Activated CD4-positive, alpha-beta memory T cell treated with anti-CD3 and anti-CD28 coated beads for 36 hours (primary cell): ENCODE measurements at regions of chr2 and their contacts with region 1.

Region 1: DNA sequence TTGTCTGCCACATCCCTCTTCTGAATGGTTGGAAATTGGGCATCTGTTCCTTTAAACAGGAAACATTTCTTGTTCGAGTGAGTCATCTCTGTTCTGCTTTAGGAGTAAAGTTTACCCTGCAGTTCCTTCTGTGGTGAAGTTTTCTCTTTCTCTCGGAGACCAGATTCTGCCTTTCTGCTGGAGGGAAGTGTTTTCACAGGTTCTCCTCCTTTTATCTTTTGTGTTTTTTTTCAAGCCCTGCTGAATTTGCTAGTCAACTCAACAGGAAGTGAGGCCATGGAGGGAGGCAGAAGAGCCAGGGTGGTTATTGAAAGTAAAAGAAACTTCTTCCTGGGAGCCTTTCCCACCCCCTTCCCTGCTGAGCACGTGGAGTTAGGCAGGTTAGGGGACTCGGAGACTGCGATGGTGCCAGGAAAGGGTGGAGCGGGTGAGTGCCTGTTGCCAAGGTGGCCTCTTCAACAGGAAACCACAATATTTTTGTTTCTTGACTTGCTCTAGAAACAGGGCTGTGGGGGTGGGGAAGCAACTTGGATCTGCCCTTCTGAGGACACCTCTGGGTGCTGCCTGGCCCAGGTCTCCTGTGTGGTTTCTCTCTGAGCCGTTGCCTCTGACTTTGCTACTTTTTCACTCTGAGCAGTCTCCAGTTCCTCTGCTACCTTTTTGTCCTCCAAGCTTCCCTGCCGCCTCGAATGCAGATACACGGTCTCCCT is 2.2 kb upstream of the CASP8 start:
- DNase-seq: peak; percentile 96
- H3K4me3 Mint-ChIP-seq: peak overlapping the region; percentile 85
- H3K27ac Mint-ChIP-seq: peak overlapping the region; percentile 98
- H3K4me1 Mint-ChIP-seq: peaks cover 66% of the 10 kb centered on the region
- H3K27me3 Mint-ChIP-seq: no peaks in the 10 kb centered on the region

Region 2: DNA sequence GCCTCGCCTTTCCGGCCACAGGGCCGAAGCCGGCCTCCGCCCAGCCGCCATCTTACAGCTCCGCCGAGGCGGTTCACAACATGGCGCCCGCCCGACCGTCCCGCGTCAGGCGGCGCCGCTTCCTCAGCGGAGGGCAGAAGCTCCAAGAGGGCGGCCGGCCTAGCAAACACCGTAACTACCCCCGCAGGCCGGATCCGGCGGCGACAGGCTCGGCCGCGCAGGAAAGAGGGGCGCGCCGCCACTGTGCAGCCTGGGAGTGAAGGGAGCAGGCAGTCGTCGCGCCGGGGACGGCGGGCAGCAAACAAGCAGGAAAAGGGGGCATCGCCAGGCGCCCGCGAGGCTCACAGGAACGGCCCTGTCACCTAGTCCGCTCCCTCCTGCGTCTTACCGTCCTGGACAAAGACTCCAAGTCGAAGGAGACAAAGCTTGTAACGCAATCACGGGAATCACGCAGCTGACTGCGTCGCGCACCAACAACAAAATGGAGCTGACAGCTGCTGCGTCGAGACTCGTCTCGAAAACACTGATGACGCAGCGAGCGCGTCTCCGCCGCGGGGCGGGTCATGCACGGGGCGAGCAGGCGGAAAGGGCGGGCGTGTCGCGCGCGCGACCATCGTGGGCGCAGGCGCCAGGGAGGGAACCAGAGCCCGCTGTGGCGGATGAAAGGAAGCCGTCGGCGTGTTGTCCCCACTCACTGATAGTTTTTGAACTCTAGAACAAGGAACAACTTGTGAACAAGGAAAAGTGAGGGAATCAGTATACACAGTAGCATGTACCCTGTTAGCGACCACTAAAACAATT is 393.7 kb before region 1 on chr2 and contains the start of gene CLK1:
- CTCF ChIA-PET with region 1: no interaction called
- POLR2A ChIA-PET with region 1: interaction called, 28 read pairs
- intact Hi-C with region 1: loop called (anchors 2 kb)
- DNase-seq: peak; percentile 98
- H3K4me3 Mint-ChIP-seq: peak within 1 kb of the TSS; percentile 87
- H3K27ac Mint-ChIP-seq: peak within 1 kb of the TSS; percentile 100
- H3K4me1 Mint-ChIP-seq: peaks cover 36% of the 10 kb centered on the region
- H3K27me3 Mint-ChIP-seq: no peaks in the 10 kb centered on the region
- total RNA-seq, gene CLK1: 112 to 114 TPM

Region 3: DNA sequence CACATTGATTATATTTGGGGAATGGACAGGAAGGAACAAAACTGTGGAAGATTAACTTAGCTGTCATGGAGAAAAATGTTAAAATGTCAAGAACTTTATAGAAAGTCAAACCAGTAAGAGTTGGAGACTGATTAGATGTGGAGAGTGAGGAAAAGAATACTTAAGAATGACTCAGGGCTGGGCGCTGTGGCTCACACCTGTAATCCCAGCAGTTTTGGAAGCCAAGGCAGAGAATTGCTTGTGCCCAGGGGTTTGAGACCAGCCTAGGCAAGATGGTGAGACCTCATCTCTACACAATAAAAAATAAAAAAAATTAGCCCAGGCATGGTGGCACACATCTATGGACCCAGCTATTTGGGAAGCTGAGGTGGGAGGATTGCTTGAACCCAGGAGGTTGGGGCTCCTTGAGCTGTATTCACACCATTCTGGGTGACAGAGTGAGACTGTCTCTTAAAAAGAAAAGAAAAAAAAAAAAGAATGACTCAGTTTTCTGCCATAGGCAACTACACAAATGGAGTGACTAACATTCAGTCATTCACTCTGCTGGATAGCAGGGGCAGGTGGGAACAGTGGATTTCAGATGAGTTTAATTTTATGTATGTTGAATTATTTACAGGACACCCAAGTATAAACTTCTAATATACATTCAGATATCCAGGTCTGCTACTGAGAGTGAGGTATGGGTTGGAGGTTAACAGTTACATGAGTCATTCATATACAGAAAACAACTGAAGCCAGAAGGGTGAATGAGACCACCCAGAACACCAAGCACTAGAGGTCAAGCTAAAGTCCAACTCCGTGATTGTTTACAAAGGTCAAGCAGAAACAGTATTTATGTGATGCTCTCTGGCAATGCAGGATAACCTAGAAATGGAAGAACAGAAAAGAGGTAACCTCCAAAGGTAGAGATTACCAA is 328.5 kb before region 1 on chr2:
- CTCF ChIA-PET with region 1: no interaction called
- POLR2A ChIA-PET with region 1: no interaction called
- intact Hi-C with region 1: no loop called
- DNase-seq: no peak
- H3K4me3 Mint-ChIP-seq: no peak overlapping the region
- H3K27ac Mint-ChIP-seq: peak overlapping the region; percentile 79
- H3K4me1 Mint-ChIP-seq: peaks cover 19% of the 10 kb centered on the region
- H3K27me3 Mint-ChIP-seq: no peaks in the 10 kb centered on the region

Region 4: GRCh38 chr2:201118121-201118960 is 139.8 kb before region 1 on chr2:
- CTCF ChIA-PET with region 1: interaction called, 3 read pairs
- POLR2A ChIA-PET with region 1: interaction called, 32 read pairs
- intact Hi-C with region 1: loop called (anchors 2 kb)
- DNase-seq: peak; percentile 93
- H3K4me3 Mint-ChIP-seq: peak overlapping the region; percentile 99
- H3K27ac Mint-ChIP-seq: peak overlapping the region; percentile 97
- H3K4me1 Mint-ChIP-seq: peaks cover 37% of the 10 kb centered on the region
- H3K27me3 Mint-ChIP-seq: no peaks in the 10 kb centered on the region

Region 5: DNA sequence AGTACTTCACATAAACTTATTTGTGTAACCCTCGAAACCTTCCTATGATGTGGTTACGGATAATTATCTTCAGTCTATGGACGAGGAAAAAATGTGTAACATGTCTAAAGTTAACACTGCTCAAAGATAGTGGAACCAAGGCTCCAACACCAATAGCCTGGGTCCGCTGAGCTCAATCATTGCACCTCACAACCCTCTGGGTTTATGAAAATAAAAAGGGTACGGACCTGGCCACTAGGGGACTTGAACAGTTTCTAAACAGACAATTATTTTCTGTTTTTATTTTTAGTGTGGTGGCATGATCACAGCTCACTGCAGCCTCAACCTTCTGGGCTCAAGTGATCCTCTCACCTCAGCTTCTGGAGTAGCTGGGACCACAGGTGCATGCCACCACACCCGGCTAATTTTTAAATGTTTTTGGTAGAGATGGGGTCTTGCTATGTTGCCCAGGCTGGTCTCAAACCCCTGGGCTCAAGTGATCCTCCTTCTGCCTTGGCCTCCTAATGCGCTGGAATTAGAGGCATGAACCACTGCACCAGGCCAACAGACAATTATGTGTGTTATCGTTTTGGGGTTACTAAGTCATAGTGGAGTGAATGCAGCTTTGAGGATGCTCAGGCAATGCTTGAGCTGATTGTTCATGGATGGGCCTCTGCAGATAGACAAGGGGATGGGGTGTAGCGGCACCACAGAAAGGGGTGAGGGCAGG is 12.3 kb after region 1 on chr2:
- CTCF ChIA-PET with region 1: interaction called, 4 read pairs
- POLR2A ChIA-PET with region 1: interaction called, 20 read pairs
- intact Hi-C with region 1: loop called (anchors 1 kb)
- DNase-seq: no peak
- H3K4me3 Mint-ChIP-seq: no peak overlapping the region
- H3K27ac Mint-ChIP-seq: no peak overlapping the region
- H3K4me1 Mint-ChIP-seq: peaks cover 82% of the 10 kb centered on the region
- H3K27me3 Mint-ChIP-seq: no peaks in the 10 kb centered on the region

Region 6: DNA sequence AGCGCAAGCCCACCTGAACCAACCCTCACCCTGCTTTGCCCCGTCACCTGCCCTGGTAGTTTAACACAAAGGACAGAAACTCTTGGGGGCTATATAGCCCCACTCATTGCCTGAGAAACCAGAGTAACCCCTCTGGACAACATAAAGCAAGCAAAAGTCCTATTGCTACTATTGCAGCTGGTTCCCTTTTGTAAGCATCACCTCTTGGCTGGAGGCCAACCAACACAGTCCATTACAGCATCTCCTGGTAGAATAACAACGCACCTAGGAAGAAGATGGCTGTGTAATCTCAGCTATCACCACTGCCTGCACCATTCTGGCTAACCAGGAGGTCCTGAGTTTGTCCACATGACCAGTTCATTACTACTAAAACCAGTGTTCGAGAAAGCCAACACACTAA is 62.6 kb after region 1 on chr2:
- CTCF ChIA-PET with region 1: no interaction called
- POLR2A ChIA-PET with region 1: no interaction called
- intact Hi-C with region 1: no loop called
- DNase-seq: no peak
- H3K4me3 Mint-ChIP-seq: no peak overlapping the region
- H3K27ac Mint-ChIP-seq: no peak overlapping the region
- H3K4me1 Mint-ChIP-seq: no peaks in the 10 kb centered on the region
- H3K27me3 Mint-ChIP-seq: no peaks in the 10 kb centered on the region

Region 7: GRCh38 chr2:201414099-201415023 is 156.2 kb after region 1 on chr2:
- CTCF ChIA-PET with region 1: interaction called, 3 read pairs
- POLR2A ChIA-PET with region 1: no interaction called
- intact Hi-C with region 1: loop called (anchors 2 kb)
- DNase-seq: no peak
- H3K4me3 Mint-ChIP-seq: no peak overlapping the region
- H3K27ac Mint-ChIP-seq: no peak overlapping the region
- H3K4me1 Mint-ChIP-seq: peaks cover 29% of the 10 kb centered on the region
- H3K27me3 Mint-ChIP-seq: no peaks in the 10 kb centered on the region

Region 8: GRCh38 chr2:201642579-201643215 is 384.6 kb after region 1 on chr2:
- CTCF ChIA-PET with region 1: no interaction called
- POLR2A ChIA-PET with region 1: no interaction called
- intact Hi-C with region 1: loop called (anchors 5 kb)
- DNase-seq: peak; percentile 89
- H3K4me3 Mint-ChIP-seq: peak overlapping the region; percentile 87
- H3K27ac Mint-ChIP-seq: peak overlapping the region; percentile 84
- H3K4me1 Mint-ChIP-seq: peaks cover 10% of the 10 kb centered on the region
- H3K27me3 Mint-ChIP-seq: no peaks in the 10 kb centered on the region